Head of caudate nucleus (tissue), 42 donors: ENCODE measurements at regions of chr10 and their contacts with region 1.

Region 1: DNA sequence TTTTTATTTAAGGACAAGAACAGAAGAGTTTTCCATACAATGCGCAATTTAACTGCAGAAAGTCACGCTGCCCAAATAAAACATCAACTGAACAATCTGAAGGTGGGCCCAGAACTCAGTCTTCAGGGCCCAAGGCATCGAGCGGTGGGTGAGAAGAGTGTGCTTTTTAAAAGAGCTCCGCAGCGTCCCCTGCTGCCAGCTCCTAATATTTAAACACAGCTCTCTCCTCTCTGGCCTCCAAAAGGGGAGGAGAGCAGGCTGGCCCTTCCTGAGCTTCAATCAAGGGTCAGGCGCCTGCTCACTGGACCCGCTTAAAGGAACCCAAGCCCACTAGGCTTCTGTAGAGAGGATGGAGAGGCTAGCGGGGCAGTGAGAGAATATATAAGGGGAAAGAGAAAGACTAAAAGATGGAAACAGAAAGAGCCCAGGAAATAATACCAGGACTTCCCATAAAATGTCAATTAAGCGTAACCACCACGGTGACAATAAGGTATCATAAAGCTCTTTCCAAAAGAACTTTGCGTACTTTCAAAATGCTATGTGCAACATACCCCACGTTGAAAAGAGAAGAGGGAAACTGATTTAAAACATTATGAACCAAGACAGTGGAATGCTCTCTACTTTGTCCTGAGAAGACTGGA is 2.8 kb downstream of the FAM53B start:
- DNase-seq: peak; percentile 75 to 97 (median 91)

Region 2: GRCh38 chr10:124530215-124530665 is 211.2 kb before region 1 on chr10:
- intact Hi-C with region 1: loop called (anchors 5 kb)
- DNase-seq: peak; percentile 82 to 96 (median 90)

Region 3: GRCh38 chr10:124588736-124589490 is 152.5 kb before region 1 on chr10:
- intact Hi-C with region 1: no loop called
- DNase-seq: peak in 32 of 42 donors; percentile 35 to 77 (median 58)

Region 4: DNA sequence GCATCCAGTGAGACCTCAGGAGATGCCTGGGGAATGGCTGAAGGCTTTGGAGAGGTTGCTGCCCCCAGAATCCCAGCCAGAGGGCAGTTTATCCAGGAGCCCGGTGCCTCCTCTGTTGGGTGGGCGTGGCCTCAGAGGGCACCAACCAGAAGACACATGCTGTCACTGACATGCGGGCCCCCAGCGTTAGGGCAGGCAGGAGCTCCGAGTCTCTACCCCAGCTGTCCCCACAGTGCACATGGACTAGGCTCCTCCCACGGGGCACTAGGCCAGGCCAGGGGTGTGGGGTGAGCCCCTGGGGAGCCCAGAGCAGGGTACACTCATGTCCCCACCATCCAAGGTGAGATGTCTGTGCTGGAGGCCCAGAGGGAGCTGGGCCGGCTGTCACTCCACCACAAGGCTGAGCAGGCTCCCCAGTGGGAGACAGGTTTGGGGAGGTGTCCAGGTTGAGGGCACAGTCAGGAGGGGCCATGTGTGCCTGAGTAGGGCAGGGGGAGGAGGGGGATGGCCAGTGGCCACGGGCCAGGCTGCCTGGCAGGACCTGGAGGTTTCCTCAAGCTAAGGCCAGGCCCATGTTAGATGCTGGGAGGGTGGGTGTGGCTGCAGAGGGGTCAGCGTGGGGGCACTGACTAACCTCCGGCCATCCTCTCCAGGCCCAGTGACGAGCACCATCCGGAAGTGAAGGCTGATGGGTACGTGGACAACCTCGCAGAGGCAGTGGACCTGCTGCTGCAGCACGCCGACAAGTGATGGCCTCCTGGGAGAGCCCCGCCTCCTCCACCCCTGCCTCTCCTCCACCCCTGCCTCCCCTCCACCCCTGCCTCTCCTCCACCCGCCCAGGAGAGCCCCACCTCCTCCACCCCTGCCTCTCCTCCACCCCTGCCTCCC is 128.5 kb before region 1 on chr10:
- intact Hi-C with region 1: no loop called
- DNase-seq: peak in 5 of 42 donors; percentile 32 to 67 (median 56)

Region 5: DNA sequence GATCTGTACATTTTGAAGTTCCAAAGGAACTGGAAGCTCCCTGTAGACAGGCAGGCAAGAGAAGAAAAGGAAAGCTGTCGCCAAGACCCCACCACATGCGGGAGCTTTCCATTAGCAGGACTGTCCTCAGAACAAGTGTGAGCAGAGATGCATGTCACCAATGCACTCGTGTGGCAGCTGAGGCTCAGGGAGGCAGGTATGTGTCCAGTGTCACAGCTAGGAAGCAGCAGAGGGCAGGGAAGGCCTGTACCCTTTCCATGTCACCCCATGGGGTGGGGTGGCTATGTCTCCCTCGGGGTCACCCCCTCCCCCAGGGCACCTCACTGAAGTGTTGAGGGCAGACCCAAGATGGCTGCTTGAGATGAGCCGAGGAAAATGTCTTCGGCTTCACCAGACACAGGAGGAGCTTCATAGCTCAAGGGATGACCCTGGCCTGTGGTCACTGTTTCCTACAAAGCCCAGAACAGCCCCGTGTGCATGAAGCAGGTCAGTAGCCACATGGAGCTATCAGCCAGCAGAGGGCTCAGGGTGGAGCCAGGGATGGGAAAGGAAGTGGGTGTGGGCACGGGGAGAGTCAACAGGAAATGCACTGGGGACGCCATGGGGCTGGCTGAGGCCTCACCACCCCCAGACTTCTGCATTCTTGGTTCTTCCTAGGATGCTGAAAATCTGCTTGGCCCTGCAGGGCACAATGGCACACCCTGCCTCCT is 93.8 kb before region 1 on chr10:
- intact Hi-C with region 1: loop called (anchors 5 kb)
- DNase-seq: peak in 26 of 42 donors; percentile 43 to 79 (median 63)

Region 6: GRCh38 chr10:124688889-124689670 is 52.3 kb before region 1 on chr10:
- intact Hi-C with region 1: loop called (anchors 5 kb)
- DNase-seq: no peak

Region 7: GRCh38 chr10:124724279-124725027 is 16.9 kb before region 1 on chr10:
- intact Hi-C with region 1: loop called (anchors 2 kb)
- DNase-seq: peak; percentile 80 to 99 (median 93)

Region 8: GRCh38 chr10:124791378-124792348 is 50.3 kb after region 1 on chr10 and contains the start of gene EEF1AKMT2:
- intact Hi-C with region 1: loop called (anchors 5 kb)
- DNase-seq: peak; percentile 44 to 92 (median 84)

Region 9: DNA sequence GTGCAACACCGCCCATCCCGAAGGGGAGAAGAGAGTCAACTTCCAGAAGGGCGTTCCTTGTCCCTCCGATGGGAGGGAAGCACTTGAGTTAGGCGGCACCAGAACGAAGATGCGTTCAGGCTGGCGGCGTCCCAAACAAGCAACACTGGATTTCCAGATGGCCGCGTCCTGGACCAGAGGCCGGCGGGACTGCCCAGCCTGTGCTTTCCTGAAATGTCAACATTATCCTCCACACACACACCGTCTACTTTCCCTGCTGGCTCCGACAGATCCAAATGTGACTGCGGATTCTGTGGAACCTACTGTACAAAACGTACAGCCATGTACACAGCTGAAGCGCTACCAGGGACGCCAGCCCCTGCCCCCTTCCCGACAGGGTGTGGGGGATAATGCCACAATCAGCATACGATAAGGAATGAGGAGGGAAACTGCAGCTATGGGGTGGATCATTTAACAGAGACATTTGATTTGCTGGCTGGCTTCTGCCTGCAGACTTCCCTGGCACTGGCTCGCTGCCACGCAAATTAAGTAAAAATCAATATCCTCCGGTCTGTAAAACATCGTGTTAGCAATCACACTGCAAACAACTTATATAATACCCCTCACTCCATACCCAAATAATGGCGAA is 282.6 kb after region 1 on chr10:
- intact Hi-C with region 1: no loop called
- DNase-seq: peak in 31 of 42 donors; percentile 35 to 82 (median 60)